Endothelial cell of umbilical vein (primary cell): ENCODE measurements at regions of chr6 and their contacts with region 1.

Region 1: DNA sequence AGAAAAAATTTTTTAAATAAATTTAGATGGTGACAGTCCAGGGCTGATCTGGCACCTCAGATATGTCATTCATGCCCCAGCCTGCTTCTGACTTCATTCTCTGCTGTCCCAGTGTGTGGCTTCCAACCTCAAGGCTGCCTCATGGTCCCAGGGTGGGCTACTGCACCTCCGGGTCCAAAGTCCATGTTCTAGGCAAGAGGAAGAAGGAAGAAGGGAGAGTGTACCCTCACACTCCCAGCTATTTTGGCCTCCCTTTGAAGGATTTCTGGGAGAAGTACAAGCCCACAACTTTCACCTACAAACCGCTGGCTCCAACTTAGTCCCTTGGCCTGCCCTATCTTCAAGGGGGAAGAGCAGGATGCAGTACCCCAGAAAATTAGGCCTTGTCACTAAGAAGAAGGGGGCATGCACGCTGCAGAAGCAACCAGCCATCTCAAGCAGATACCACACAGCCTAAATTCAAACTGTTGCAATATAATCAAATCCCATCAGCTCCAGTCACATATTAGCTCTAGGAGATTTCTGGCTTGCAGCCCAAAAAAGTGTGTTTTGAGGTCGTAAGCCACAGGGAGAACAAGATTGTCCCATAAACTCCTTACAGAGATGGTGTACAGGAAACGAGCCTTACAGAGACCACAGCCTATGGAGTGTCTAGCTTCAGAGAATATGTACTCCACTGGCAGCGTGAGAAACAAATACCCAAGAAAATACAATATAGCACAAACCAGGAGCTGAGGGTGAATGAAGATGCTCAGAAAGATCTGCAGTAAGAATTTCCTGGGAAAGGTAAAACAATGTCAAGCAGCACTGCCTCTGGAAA is 906 bp upstream of the BTN3A2 start:
- DNase-seq: no peak
- H3K4me3 ChIP-seq: peak overlapping the region; percentile 62 to 93 (median 75)
- H3K27ac ChIP-seq: peak overlapping the region; percentile 69
- H3K4me1 ChIP-seq: peaks cover 9% of the 10 kb centered on the region
- H3K27me3 ChIP-seq: no peaks in the 10 kb centered on the region
- CTCF ChIP-seq: no peak
- POLR2A ChIP-seq: no peak

Region 2: DNA sequence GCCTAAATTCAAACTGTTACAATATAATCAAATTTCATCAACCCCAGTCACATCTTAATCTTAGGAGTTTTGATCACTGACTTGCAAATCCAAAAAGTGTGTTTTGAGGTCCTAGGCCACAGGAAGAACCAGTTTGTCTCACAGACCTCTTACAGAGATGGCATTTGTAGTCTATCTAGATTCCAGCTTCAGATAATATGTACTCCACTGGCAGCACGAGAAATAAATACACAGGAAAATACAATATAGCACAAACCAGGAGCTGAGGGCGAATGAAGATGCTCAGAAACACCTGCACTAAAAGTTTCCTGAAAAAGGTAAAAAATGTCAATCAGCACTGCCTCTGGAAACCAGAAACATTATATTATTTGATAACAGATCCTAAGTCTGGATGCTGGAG is 75.6 kb after region 1 on chr6:
- CTCF ChIA-PET with region 1: no interaction called
- POLR2A ChIA-PET with region 1: no interaction called
- dilution Hi-C with region 1: no loop called
- intact Hi-C with region 1: loop called (anchors 1 kb)
- DNase-seq: no peak
- H3K4me3 ChIP-seq: peak overlapping the region; percentile 58 to 97 (median 96)
- H3K27ac ChIP-seq: no peak overlapping the region
- H3K4me1 ChIP-seq: peaks cover 10% of the 10 kb centered on the region
- H3K27me3 ChIP-seq: no peaks in the 10 kb centered on the region
- CTCF ChIP-seq: no peak
- POLR2A ChIP-seq: no peak